Spleen (tissue), 13 donors: ENCODE measurements at regions of chr11 and their contacts with region 1.

Region 1: DNA sequence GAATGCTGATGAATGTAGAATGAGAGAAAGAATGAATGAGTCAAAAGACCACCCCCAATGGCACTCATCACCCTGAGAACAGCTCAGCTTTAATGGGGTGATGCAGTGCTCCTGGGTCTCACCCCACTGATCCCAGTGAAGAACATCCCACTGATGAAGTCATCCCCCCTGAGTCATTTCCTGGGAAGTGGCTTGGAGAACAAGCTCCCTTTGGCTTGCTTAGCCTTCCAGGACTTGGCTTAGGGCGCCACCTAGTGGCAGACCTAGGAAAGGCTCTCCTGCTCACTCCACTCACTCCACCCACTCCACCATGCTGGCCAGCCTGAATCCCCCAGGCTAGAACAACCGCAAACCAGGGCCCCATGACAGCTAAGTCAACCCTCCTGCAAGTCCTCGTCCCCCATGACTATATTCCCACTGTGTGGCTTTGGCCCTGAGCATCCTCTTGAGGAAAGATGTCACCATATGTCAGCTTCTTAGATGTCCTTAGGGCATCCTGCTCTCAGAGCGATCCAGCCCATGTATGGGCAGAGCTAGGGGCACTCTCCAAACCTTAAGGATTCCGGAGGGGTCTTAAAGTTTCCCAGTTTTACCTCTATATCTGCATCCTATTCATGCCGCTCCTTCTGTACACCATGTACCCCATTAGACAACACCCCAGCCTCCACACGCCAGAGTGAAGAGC is 17.8 kb upstream of the TMPRSS13 start:
- DNase-seq: peak; percentile 95
- H3K4me3 ChIP-seq: no peak overlapping the region
- H3K27ac ChIP-seq: no peak overlapping the region
- H3K4me1 ChIP-seq: peaks cover 28 to 74% (median 53%) of the 10 kb centered on the region in 6 donors
- H3K27me3 ChIP-seq: no peaks in the 10 kb centered on the region
- CTCF ChIP-seq: peak; percentile 95 to 98 (median 97)
- POLR2A ChIP-seq: no peak

Region 2: GRCh38 chr11:117621226-117621625 is 325.8 kb before region 1 on chr11:
- intact Hi-C with region 1: no loop called
- DNase-seq: no peak
- H3K4me3 ChIP-seq: no peak overlapping the region
- H3K27ac ChIP-seq: no peak overlapping the region
- H3K4me1 ChIP-seq: no peaks in the 10 kb centered on the region
- H3K27me3 ChIP-seq: peaks cover 0 to under 1% (median 0%) of the 10 kb centered on the region in 7 donors
- CTCF ChIP-seq: peak in 5 of 11 experiments; percentile 17 to 44 (median 37)
- POLR2A ChIP-seq: no peak

Region 3: GRCh38 chr11:117807482-117808327 is 139.3 kb before region 1 on chr11:
- intact Hi-C with region 1: loop called (anchors 5 kb)
- DNase-seq: peak; percentile 91
- H3K4me3 ChIP-seq: no peak overlapping the region
- H3K27ac ChIP-seq: no peak overlapping the region
- H3K4me1 ChIP-seq: peaks cover 4 to 30% (median 16%) of the 10 kb centered on the region in 6 donors
- H3K27me3 ChIP-seq: peaks cover 0 to 7% (median 0%) of the 10 kb centered on the region in 7 donors
- CTCF ChIP-seq: peak; percentile 86 to 93 (median 91)
- POLR2A ChIP-seq: no peak

Region 4: DNA sequence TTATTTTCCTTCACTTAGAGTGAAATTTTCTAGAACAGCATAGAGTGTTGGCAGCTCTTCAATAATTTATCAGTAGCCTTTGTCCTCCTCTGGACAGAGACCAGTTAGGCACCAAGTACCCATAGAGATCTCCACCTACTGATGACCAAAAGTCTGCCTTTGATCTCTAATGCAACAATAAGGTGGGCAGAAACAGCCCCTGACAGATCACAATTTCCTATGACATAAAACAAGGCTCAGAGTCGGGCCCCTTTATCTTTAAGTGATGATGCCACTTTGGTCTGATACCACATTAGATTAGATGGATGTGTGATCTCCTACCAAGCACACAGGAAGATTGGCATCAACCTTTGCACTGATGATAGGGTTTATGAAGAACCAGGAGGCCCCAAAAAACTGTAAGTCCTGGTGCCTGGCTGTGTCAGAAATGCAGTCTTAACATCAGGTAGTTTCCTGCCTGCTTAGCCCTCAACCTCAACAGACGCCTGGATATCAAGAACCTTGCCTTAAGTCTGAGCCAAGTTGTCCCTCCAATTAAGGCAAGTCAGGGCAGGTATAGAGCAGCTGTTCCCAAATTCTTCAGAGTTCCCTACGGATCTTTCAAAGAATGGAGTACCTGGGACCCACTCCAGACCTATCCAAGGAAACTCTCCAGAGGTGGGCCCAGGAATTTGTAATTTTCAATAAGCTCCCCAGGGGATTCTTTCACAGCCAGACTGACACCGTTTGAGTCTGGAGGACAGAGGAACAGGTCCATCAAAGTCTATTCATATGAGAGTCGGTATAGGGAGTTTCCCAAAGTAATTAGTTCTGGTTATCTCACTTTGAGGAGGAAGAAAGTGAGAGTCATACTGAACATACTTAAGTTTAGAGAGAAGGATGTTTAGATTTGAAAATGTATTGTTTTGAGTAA is 99.3 kb after region 1 on chr11:
- intact Hi-C with region 1: loop called (anchors 5 kb)
- DNase-seq: no peak
- H3K4me3 ChIP-seq: no peak overlapping the region
- H3K27ac ChIP-seq: peak overlapping the region in 5 of 8 donors; percentile 28 to 56 (median 38)
- H3K4me1 ChIP-seq: peaks cover 0 to 48% (median 20%) of the 10 kb centered on the region in 6 donors
- H3K27me3 ChIP-seq: no peaks in the 10 kb centered on the region
- CTCF ChIP-seq: no peak
- POLR2A ChIP-seq: no peak